CD8-positive, alpha-beta memory T cell (primary cell): ENCODE measurements at regions of chr6 and their contacts with region 1.

Region 1: DNA sequence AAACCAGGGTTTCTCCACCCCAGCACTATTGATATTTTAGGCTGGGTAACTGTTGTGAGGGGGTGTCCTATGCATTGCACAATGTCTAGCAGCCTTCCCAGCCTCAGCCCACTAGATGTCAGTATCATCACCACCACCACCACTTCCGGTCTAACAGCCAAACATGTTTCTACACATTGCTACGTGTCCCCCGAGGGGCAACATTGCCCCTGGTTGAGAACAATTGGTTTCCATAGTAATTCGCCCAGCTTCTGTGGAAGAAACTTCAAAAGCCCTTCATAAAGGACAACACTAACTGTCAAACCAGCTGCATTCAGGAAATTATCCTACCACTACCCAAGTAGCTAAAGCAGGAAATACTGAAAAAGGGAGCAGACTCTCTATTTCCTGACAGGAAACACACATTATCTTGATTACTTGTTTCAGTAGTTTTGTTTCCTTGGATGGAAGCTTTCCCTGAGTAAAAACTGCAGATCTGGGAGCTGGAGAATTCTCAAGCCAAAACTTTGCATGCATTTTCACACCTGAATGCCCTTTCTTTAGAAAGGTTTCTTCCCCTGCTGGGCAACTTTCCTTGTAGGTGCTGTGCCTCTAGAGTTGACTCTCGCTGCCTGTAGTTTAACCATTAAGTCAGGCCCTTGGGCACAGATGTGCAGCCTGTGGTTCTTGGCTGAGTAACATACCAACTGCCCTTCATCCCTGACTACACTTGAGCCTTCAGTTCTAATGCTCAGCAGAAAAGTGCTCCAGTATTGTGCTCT is 23.6 kb downstream of the PKHD1 start:
- DNase-seq: peak; percentile 21 to 70 (median 56)
- H3K4me3 ChIP-seq: peak overlapping the region; percentile 35
- H3K4me3 Mint-ChIP-seq: peak overlapping the region; percentile 13 to 92 (median 83)
- H3K27ac ChIP-seq: no peak overlapping the region
- H3K27ac Mint-ChIP-seq: peak overlapping the region in 7 of 8 donors; percentile 45 to 95 (median 84)
- H3K4me1 ChIP-seq: peaks cover 7% of the 10 kb centered on the region
- H3K4me1 Mint-ChIP-seq: peaks cover 10 to 14% (median 13%) of the 10 kb centered on the region in 3 donors
- H3K27me3 ChIP-seq: no peaks in the 10 kb centered on the region
- H3K27me3 Mint-ChIP-seq: peaks cover 0 to 12% of the 10 kb centered on the region in 2 donors

Region 2: GRCh38 chr6:52020945-52021570 is 42.7 kb before region 1 on chr6:
- CTCF ChIA-PET with region 1: no interaction called
- POLR2A ChIA-PET with region 1: no interaction called
- DNase-seq: peak in 1 of 5 donors; percentile 8
- H3K4me3 ChIP-seq: no peak overlapping the region
- H3K4me3 Mint-ChIP-seq: no peak overlapping the region
- H3K27ac ChIP-seq: no peak overlapping the region
- H3K27ac Mint-ChIP-seq: no peak overlapping the region
- H3K4me1 ChIP-seq: no peaks in the 10 kb centered on the region
- H3K4me1 Mint-ChIP-seq: no peaks in the 10 kb centered on the region
- H3K27me3 ChIP-seq: no peaks in the 10 kb centered on the region
- H3K27me3 Mint-ChIP-seq: peaks cover 11 to 33% of the 10 kb centered on the region in 2 donors

Region 3: GRCh38 chr6:52049252-52050050 is 14.3 kb before region 1 on chr6:
- CTCF ChIA-PET with region 1: interaction called, 10 read pairs
- POLR2A ChIA-PET with region 1: no interaction called
- DNase-seq: no peak
- H3K4me3 ChIP-seq: no peak overlapping the region
- H3K4me3 Mint-ChIP-seq: no peak overlapping the region
- H3K27ac ChIP-seq: no peak overlapping the region
- H3K27ac Mint-ChIP-seq: no peak overlapping the region
- H3K4me1 ChIP-seq: no peaks in the 10 kb centered on the region
- H3K4me1 Mint-ChIP-seq: no peaks in the 10 kb centered on the region
- H3K27me3 ChIP-seq: peaks cover 5% of the 10 kb centered on the region
- H3K27me3 Mint-ChIP-seq: peaks cover 19 to 57% of the 10 kb centered on the region in 2 donors